Caco-2 (cell line): ENCODE measurements at regions of chr16 and their contacts with region 1.

Region 1: DNA sequence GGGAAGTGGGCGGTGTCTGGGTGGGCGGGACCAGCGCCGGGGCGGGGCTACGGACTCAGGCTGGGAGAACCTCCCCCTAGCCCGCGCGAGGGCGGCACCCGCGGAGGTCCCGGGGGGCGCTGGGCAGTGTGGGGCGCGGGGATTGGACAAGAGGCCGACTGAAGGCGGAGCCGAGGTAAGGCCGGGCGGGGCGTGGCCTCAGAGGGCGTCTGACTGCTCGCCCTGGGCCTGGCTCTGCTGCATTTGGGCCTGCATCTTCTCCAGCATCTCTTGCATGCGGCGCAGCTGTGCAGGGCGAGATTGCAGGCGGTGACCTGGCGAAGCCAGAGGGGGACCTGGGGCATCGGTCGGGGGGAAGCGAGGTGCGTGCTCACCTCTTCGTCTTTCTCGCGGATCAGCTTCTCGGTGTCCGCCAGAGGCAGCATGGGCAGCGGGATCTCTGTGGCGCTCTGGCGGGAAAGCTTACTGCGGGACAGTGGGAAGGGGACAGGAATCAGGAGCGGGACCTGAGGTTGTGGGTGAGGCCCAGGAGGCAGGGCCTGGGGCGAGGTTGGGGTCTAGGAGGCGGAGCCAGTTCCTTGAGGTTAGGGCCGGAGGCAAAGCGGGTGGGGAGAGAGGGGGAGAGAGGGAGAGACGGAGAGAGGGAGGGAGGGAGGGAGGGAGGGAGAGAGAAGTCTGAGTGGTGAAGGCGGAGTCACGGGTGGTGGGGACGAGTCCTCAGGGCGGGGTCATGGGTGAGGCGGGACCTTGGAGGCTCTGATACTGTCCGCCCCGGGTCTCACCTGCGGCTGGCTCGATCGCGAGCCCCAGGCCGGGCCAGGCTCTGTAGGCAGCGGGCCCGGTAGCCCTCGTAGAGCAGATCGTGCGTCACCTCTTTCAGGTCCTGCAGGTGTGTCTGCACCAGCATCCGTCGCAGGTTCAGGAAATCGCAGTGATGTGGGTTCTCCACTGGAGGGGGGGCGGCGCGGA is 3.8 kb downstream of the SEPTIN1 start:
- DNase-seq: peak; percentile 97 to 98
- H3K4me3 ChIP-seq: peak overlapping the region; percentile 79
- H3K4me3 Mint-ChIP-seq: peak overlapping the region; percentile 87
- H3K27ac Mint-ChIP-seq: peak overlapping the region; percentile 98
- H3K4me1 ChIP-seq: peaks cover 18% of the 10 kb centered on the region
- H3K4me1 Mint-ChIP-seq: peaks cover 13% of the 10 kb centered on the region
- H3K27me3 ChIP-seq: no peaks in the 10 kb centered on the region
- H3K27me3 Mint-ChIP-seq: no peaks in the 10 kb centered on the region
- CTCF ChIP-seq: no peak

Region 2: GRCh38 chr16:28958836-28959235 is 1419.7 kb before region 1 on chr16:
- CTCF ChIA-PET with region 1: no interaction called
- POLR2A ChIA-PET with region 1: interaction called, 15 read pairs
- intact Hi-C with region 1: no loop called
- DNase-seq: no peak
- H3K4me3 ChIP-seq: no peak overlapping the region
- H3K4me3 Mint-ChIP-seq: no peak overlapping the region
- H3K27ac Mint-ChIP-seq: no peak overlapping the region
- H3K4me1 ChIP-seq: no peaks in the 10 kb centered on the region
- H3K4me1 Mint-ChIP-seq: no peaks in the 10 kb centered on the region
- H3K27me3 ChIP-seq: no peaks in the 10 kb centered on the region
- H3K27me3 Mint-ChIP-seq: no peaks in the 10 kb centered on the region
- CTCF ChIP-seq: no peak

Region 3: DNA sequence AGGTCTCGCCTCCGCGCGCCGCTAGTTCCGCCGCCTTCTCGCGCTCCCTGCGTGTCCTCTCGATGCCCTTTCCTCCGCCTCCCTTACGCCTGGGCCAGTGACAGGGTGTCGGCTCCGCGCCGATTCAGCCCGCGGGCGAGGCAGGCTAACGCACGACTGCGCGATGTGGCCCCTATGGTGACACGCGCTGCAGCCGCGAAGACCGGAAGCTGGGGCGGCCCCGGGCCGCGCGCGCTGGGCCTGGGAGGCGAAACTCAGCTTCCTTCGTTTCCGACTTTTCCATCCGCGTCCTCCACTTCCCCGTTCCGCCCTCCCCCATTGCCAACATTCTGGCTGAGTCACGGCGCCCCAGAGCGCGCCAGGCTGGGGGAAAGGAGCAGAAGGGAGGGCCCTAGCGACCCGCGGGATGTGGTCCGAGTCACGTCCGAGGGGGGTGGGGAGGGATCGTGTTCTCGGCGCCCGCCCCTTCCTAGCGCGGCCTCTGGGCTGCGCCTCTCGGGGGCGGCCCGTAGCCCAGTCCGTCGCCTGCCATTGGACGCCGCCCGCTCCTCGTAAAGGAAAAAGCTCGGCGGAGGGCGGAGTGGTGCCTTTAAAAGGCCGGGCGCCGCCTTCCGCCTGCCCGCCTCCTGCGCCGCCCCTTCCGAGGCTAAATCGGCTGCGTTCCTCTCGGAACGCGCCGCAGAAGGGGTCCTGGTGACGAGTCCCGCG is 313.2 kb before region 1 on chr16 and contains the start of gene ALDOA:
- CTCF ChIA-PET with region 1: no interaction called
- POLR2A ChIA-PET with region 1: no interaction called
- intact Hi-C with region 1: loop called (anchors 2 kb)
- DNase-seq: peak; percentile 95 to 96
- H3K4me3 ChIP-seq: peak within 1 kb of the TSS; percentile 98
- H3K4me3 Mint-ChIP-seq: peak within 1 kb of the TSS; percentile 95
- H3K27ac Mint-ChIP-seq: peak within 1 kb of the TSS; percentile 97
- H3K4me1 ChIP-seq: peaks cover 8% of the 10 kb centered on the region; the same call in 1 of the 2 replicates
- H3K4me1 Mint-ChIP-seq: peaks cover 19% of the 10 kb centered on the region
- H3K27me3 ChIP-seq: no peaks in the 10 kb centered on the region
- H3K27me3 Mint-ChIP-seq: no peaks in the 10 kb centered on the region
- CTCF ChIP-seq: no peak
- total RNA-seq, gene ALDOA: 675 and 802 TPM in 2 replicates

Region 4: DNA sequence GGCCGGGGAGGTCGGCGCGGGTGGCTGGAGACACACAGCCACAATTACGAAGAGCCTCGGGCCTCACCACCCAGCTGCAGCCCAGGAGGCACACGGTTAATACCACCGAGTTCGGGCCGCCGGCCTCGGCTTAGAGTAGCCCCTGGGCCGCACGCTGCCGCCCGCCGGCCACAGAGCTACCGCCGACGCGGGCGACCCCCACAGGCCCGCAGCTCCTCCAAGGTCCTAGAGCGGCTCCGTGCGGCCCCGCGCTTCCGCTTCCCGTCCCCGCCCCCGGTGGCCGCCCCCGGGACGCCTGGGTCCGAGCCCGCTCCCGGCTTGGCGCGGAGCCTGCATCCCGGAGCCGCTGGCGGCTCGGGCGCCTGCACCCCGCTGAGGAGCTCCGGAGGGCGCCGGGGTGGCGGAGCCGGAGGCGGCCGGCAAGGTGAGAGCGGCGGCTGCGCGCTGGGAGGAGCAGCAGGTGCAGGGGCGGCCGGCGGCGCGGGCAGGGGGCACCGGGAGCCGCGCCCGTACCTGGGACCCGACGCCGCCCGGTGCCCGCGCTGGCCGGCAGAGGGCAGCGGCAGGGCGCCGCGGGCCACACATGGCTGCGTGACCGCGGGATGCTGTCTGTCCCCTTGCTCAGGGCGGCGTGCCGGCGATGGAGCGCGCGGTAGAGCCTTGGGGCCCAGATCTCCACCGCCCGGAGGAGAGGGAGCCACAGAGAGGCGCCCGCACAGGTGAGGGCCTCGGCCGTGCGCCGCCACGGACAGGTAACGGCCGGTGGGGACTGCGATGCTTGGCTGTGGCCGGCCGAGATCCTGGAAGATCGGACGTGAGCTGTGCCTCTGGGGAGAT is 16.9 kb after region 1 on chr16 and contains the start of gene ZNF48:
- CTCF ChIA-PET with region 1: interaction called, 7 read pairs
- POLR2A ChIA-PET with region 1: no interaction called
- intact Hi-C with region 1: loop called (anchors 2 kb)
- DNase-seq: peak; percentile 87 to 91
- H3K4me3 ChIP-seq: peak within 1 kb of the TSS; percentile 88
- H3K4me3 Mint-ChIP-seq: peak within 1 kb of the TSS; percentile 82
- H3K27ac Mint-ChIP-seq: peak within 1 kb of the TSS; percentile 46
- H3K4me1 ChIP-seq: peaks cover 6% of the 10 kb centered on the region; the same call in 1 of the 2 replicates
- H3K4me1 Mint-ChIP-seq: peaks cover 19% of the 10 kb centered on the region
- H3K27me3 ChIP-seq: no peaks in the 10 kb centered on the region
- H3K27me3 Mint-ChIP-seq: no peaks in the 10 kb centered on the region
- CTCF ChIP-seq: peak in 1 of 2 experiments; percentile 40
- total RNA-seq, gene ZNF48: 12.8 and 13.4 TPM in 2 replicates